ENCODE measurements at regions of chr17 and their contacts with region 1.

Region 1: GRCh38 chr17:76523084-76524037 is 14.1 kb downstream of the CYGB start:
- DNase-seq: peak; percentile 66 to 93 (median 81)
- ATAC-seq: peak; percentile 88
- H3K4me3 ChIP-seq: no peak overlapping the region
- H3K4me3 Mint-ChIP-seq: no peak overlapping the region
- H3K27ac ChIP-seq: no peak overlapping the region
- H3K27ac Mint-ChIP-seq: peak overlapping the region; percentile 41
- H3K4me1 ChIP-seq: peaks cover 35% of the 10 kb centered on the region
- H3K4me1 Mint-ChIP-seq: peaks cover 26% of the 10 kb centered on the region
- H3K27me3 ChIP-seq: no peaks in the 10 kb centered on the region
- H3K27me3 Mint-ChIP-seq: no peaks in the 10 kb centered on the region
- CTCF ChIP-seq: peak; percentile 99

Region 2: GRCh38 chr17:76547184-76547641 is 23.9 kb after region 1 on chr17:
- CTCF ChIA-PET with region 1: interaction called, 8 read pairs
- POLR2A ChIA-PET with region 1: interaction called, 5 read pairs
- intact Hi-C with region 1: loop called (anchors 1 kb)
- DNase-seq: peak; percentile 37 to 80 (median 55)
- ATAC-seq: peak; percentile 93
- H3K4me3 ChIP-seq: no peak overlapping the region
- H3K4me3 Mint-ChIP-seq: no peak overlapping the region
- H3K27ac ChIP-seq: no peak overlapping the region
- H3K27ac Mint-ChIP-seq: no peak overlapping the region
- H3K4me1 ChIP-seq: peaks cover 7% of the 10 kb centered on the region
- H3K4me1 Mint-ChIP-seq: no peaks in the 10 kb centered on the region
- H3K27me3 ChIP-seq: peaks cover 0 to 7% of the 10 kb centered on the region in 2 experiments
- H3K27me3 Mint-ChIP-seq: peaks cover 12% of the 10 kb centered on the region
- CTCF ChIP-seq: peak; percentile 62

Region 3: DNA sequence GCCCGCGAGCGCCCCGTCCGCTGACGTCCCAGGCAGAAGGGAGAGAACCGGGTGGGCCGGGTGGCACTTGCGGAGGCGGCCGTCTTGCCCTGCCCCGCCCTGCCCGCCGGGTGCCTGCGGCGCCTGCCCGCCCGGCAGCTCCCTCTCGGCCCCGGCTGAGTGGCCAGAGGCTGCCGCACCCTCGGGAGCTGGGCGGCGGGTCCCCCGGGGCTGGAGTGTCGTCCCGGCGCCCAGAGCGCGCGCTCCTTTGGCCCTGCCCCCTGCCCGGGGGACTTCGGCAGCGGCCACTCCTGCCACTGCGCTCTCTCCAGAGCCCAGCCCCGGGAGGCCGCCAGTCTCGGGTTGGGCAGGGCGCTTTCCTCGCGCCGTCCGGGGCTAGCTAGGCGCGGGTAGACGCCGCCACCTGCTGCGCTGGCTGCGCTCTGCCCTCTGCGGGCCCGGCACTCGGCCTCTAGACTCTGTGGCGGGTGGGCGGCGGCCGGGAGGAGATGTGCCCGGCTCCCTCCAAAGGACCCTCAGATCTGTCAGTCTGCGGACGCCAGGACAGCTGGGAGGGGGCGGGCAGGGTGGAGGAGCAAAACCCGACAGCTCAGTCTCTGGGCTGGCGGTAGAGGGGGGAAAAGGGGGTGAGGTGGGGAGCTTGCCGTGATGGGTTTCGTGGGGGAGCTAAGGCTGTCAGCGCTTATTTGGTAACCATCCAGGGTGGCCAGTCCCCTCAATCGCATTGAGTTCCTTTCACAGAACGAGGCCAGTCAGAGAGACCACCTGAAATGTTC is 62.6 kb after region 1 on chr17 and contains the start of gene ST6GALNAC2:
- CTCF ChIA-PET with region 1: interaction called, 16 read pairs
- POLR2A ChIA-PET with region 1: no interaction called
- intact Hi-C with region 1: loop called in 1 of 2 experiments (anchors 2 kb)
- DNase-seq: peak in 12 of 14 experiments; percentile 11 to 75 (median 30)
- ATAC-seq: peak; percentile 75
- H3K4me3 ChIP-seq: peak within 1 kb of the TSS; percentile 56
- H3K4me3 Mint-ChIP-seq: peak within 1 kb of the TSS; percentile 79
- H3K27ac ChIP-seq: no peak within 1 kb of the TSS
- H3K27ac Mint-ChIP-seq: no peak within 1 kb of the TSS
- H3K4me1 ChIP-seq: peaks cover 26% of the 10 kb centered on the region
- H3K4me1 Mint-ChIP-seq: peaks cover 9% of the 10 kb centered on the region
- H3K27me3 ChIP-seq: peaks cover 31 to 49% of the 10 kb centered on the region in 2 experiments
- H3K27me3 Mint-ChIP-seq: peaks cover 59% of the 10 kb centered on the region
- CTCF ChIP-seq: no peak
- total RNA-seq, gene ST6GALNAC2: 0.49 to 1.2 TPM

Region 4: DNA sequence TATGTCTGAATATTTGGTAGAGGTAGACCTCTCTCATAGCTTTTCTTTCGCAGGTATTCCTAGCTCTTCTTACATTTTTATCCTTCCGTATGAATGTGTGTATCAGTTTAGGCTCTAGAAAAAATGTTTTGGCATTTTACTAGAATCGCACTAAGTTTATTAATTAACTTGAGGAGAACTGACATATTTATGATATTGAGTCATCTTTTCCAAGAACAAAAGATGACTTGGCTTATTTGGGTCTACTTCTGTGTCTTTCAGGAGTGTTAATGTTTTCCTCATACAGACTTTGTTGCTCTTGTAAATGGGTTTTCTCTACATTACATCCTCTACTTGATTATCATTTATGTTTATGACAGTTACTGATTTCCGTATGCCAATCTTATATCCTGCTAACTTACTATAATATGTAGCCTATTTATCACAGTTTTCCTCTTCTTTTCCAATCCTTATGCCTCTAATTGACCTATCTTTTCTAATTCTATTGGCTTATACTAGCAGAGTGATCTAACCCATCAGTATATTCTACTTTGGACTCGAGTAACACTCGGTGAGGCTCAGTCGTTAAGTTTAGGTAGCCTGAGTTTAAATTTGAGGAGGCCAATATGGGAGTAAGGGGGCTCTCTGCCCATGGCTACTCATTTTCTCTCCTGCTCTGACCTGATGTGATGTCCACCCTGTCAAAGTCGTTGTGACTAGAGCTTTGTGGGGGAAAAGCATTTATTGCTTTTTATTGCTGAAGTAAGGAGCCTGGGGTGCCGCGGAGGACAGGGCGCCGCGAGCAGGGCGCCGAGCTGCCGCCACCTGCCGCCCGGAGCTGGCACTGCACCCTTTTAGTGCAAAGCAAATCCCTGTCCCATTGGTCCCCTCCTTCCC is 100.1 kb after region 1 on chr17:
- CTCF ChIA-PET with region 1: interaction called, 60 read pairs
- POLR2A ChIA-PET with region 1: interaction called, 11 read pairs
- intact Hi-C with region 1: loop called (anchors 1 kb)
- DNase-seq: peak; percentile 59 to 87 (median 74)
- ATAC-seq: peak; percentile 99
- H3K4me3 ChIP-seq: no peak overlapping the region
- H3K4me3 Mint-ChIP-seq: no peak overlapping the region
- H3K27ac ChIP-seq: no peak overlapping the region
- H3K27ac Mint-ChIP-seq: no peak overlapping the region
- H3K4me1 ChIP-seq: peaks cover 5% of the 10 kb centered on the region
- H3K4me1 Mint-ChIP-seq: peaks cover 5% of the 10 kb centered on the region
- H3K27me3 ChIP-seq: no peaks in the 10 kb centered on the region
- H3K27me3 Mint-ChIP-seq: peaks cover 10% of the 10 kb centered on the region
- CTCF ChIP-seq: peak; percentile 94

Region 5: GRCh38 chr17:76635039-76635438 is 111.7 kb after region 1 on chr17:
- CTCF ChIA-PET with region 1: no interaction called
- POLR2A ChIA-PET with region 1: no interaction called
- intact Hi-C with region 1: no loop called
- DNase-seq: no peak
- ATAC-seq: no peak
- H3K4me3 ChIP-seq: no peak overlapping the region
- H3K4me3 Mint-ChIP-seq: no peak overlapping the region
- H3K27ac ChIP-seq: no peak overlapping the region
- H3K27ac Mint-ChIP-seq: no peak overlapping the region
- H3K4me1 ChIP-seq: peaks cover 5% of the 10 kb centered on the region
- H3K4me1 Mint-ChIP-seq: no peaks in the 10 kb centered on the region
- H3K27me3 ChIP-seq: no peaks in the 10 kb centered on the region
- H3K27me3 Mint-ChIP-seq: no peaks in the 10 kb centered on the region
- CTCF ChIP-seq: no peak

Region 6: DNA sequence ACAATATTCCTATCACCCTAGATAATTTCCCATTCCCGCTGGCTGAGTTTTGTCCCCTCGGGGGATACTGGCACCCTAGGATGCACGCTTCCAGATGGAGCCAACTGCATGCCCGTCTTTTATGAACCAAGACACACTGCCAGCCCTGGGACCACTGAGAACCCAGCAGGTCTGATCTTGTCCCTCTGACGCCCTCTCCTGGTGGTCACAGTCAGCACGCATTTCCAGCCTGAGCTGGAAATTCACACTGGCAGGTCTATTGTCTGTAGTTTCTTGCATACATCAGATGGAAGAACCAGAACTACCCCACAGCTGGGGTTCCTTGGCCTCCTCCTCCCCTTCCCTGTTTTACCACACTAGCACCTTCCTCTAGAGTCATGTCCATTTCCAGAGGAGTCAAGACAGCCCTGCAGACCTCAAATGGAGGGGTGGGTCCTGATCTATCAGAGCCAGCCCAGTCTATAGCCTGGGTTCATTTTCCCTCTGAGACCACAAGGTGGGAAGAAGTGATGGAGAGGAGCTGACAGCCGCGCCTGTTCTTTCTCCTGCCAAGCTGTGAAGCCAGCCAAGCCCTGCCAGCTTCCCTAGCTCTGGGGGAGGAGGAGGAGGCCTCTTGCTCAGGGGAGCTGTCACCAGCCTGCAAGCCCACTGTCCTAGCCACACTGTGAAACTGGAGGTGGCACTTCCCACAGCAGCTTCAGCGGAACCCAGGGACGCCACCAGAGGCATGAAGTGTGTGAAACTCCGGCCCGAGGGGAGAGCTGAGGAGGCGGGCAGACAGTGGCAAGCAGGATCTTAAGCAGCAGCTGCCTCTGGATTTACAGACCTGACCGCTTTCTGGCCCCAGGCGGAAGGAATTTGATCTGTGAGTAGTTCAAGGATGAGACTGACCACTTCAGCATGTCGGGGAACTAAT is 158.1 kb after region 1 on chr17:
- CTCF ChIA-PET with region 1: interaction called, 20 read pairs
- POLR2A ChIA-PET with region 1: interaction called, 4 read pairs
- intact Hi-C with region 1: loop called (anchors 1 kb)
- DNase-seq: peak; percentile 63 to 85 (median 72)
- ATAC-seq: peak; percentile 86
- H3K4me3 ChIP-seq: no peak overlapping the region
- H3K4me3 Mint-ChIP-seq: no peak overlapping the region
- H3K27ac ChIP-seq: no peak overlapping the region
- H3K27ac Mint-ChIP-seq: peak overlapping the region; percentile 53
- H3K4me1 ChIP-seq: peaks cover 45% of the 10 kb centered on the region
- H3K4me1 Mint-ChIP-seq: peaks cover 11% of the 10 kb centered on the region
- H3K27me3 ChIP-seq: no peaks in the 10 kb centered on the region
- H3K27me3 Mint-ChIP-seq: no peaks in the 10 kb centered on the region
- CTCF ChIP-seq: peak; percentile 65

Region 7: GRCh38 chr17:76714822-76715495 is 191.6 kb after region 1 on chr17:
- CTCF ChIA-PET with region 1: interaction called, 6 read pairs
- POLR2A ChIA-PET with region 1: interaction called, 4 read pairs
- intact Hi-C with region 1: loop called (anchors 1 to 2 kb)
- DNase-seq: peak; percentile 64 to 87 (median 79)
- ATAC-seq: no peak
- H3K4me3 ChIP-seq: no peak overlapping the region
- H3K4me3 Mint-ChIP-seq: peak overlapping the region; percentile 3
- H3K27ac ChIP-seq: no peak overlapping the region
- H3K27ac Mint-ChIP-seq: peak overlapping the region; percentile 96
- H3K4me1 ChIP-seq: peaks cover 33% of the 10 kb centered on the region
- H3K4me1 Mint-ChIP-seq: peaks cover 42% of the 10 kb centered on the region
- H3K27me3 ChIP-seq: no peaks in the 10 kb centered on the region
- H3K27me3 Mint-ChIP-seq: no peaks in the 10 kb centered on the region
- CTCF ChIP-seq: peak; percentile 88